Activated naive CD8-positive, alpha-beta T cell treated with anti-CD3 and anti-CD28 coated beads, Interleukin-2, amount 10 ng/mL, durations not matched to agents 7 days and 5 days (primary cell): ENCODE measurements at regions of chr13 and their contacts with region 1.

Region 1: DNA sequence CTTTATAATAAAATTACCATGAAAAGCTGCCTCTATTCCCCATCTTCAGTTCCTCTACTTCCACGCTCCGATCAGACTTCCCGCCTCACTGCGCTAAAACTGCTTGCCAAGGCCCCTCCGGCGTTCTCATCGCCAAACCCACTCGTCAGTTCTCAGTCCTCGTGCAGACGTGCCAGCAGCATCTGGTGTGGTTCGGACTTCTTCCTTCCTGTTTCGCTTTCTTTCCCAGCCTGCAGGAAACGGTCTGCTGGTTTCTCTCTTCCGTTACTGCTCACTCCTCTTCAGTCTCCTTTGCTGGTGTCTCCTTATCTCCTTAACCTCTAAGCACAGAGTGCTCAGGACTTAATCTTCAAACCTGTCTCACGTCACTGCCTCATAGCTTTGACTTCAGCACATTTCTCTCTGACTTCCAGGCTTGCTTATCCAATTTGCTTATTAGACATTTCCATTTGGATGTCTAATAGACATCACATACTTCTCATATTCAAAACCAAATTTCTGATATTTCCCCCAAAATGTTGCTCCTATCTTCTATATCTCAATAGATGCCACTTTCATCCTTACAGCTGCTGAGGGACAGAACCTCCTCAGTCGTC is 40.3 kb downstream of the RCBTB2 start:
- DNase-seq: peak; percentile 70
- ATAC-seq: peak; percentile 85
- H3K4me3 Mint-ChIP-seq: no peak overlapping the region
- H3K27ac Mint-ChIP-seq: no peak overlapping the region
- H3K4me1 Mint-ChIP-seq: peaks cover 43% of the 10 kb centered on the region
- H3K27me3 Mint-ChIP-seq: no peaks in the 10 kb centered on the region

Region 2: DNA sequence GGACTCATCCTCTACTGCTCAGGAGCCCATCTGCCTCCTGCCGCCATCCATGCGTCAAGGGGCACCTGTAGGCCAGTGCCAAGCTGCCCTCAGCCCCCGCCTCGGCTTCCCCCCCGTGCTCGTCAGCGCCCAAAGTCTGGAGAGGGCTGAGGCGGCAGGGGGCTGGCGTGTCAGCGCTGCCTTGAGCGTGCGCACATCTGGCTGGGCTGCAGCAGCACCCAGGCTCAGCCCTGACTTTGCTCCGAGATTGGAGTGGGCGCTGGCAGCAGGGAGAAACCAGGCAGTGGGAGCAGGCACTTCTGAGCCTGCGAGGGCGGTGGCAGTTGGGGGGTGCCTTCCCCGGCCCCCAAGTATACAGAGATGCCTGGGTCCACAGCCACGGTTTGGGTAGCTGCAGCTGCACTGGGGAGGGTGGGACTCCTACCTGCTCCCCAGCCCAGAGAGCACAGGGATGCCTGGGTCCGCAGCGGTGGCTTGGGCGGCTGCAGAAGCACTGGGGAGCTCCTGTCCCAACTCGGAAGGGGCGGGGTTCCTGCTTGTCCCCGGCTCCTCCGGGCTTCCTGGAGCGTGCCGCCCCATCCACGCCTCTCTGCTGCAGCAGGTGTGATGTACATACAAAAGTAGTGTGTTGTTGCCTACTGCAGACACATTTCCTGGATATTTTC is 34.9 kb before region 1 on chr13:
- POLR2A ChIA-PET with region 1: no interaction called
- DNase-seq: no peak
- ATAC-seq: no peak
- H3K4me3 Mint-ChIP-seq: no peak overlapping the region
- H3K27ac Mint-ChIP-seq: no peak overlapping the region
- H3K4me1 Mint-ChIP-seq: peaks cover 8% of the 10 kb centered on the region
- H3K27me3 Mint-ChIP-seq: no peaks in the 10 kb centered on the region

Region 3: DNA sequence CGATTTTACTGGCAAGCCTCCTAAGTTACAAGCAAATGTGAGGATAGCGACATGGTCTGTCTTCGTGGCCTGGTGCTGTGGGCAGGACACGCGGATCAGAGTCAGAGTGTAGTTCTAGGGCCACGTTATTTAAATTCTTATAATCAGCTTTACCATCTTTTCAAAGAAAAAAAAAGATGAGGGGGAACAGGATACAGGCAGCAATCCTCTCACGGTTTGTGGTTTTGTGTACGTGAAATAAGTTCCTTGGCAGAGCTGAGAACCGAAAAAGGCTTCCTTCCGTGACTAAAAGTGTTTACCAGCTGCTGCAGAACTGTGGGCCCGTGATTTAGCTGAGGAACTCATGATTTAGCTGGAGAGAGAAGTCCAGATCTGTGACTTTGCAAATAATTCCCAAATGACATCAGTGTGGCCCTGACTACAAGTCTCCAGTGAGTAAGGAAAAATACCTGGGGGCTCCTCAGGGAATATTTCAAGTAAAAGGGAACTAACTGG is 13.1 kb after region 1 on chr13:
- POLR2A ChIA-PET with region 1: interaction called, 22 read pairs
- DNase-seq: peak; percentile 54
- ATAC-seq: peak; percentile 88
- H3K4me3 Mint-ChIP-seq: peak overlapping the region; percentile 67
- H3K27ac Mint-ChIP-seq: peak overlapping the region; percentile 92
- H3K4me1 Mint-ChIP-seq: peaks cover 62% of the 10 kb centered on the region
- H3K27me3 Mint-ChIP-seq: no peaks in the 10 kb centered on the region

Region 4: DNA sequence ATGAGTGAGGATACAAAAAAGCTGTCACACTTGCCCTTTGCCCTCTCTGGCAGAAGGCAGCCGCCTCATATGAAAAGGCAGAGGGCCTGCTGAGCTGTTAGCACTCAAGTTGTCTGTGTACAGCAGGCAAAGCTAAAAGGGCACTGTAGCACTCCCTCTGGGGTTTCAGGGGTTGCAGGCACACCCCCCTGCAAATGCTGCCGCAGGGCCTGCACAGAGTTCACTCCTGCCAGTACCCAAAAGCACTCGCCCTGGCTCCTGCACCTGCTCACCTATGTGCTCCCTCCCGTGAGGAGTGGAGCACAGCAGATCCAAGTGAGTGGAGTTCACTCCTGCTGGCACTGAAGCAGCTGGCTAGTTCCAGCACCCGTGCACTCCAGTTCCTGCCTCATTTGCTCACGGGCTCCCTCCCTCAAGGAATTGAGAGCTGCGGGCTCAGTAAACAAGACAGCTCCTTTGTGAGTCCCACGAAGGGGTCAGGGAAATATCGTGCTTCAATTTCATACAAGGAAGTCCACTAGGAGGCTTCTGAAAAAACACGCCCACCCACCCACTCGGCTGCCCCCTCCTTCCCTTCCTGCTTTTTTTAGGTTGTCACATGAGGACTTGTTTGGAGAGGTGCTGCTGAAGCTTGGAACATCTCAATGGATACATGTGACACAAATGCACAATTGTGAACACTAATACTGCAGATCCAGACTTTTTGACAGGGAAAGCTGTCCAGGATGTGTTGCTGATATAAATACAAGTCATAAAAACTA is 50.2 kb after region 1 on chr13:
- POLR2A ChIA-PET with region 1: no interaction called
- DNase-seq: no peak
- ATAC-seq: no peak
- H3K4me3 Mint-ChIP-seq: no peak overlapping the region
- H3K27ac Mint-ChIP-seq: no peak overlapping the region
- H3K4me1 Mint-ChIP-seq: peaks cover 6% of the 10 kb centered on the region
- H3K27me3 Mint-ChIP-seq: peaks cover 6% of the 10 kb centered on the region

Region 5: GRCh38 chr13:48769107-48769704 is 276.6 kb after region 1 on chr13:
- POLR2A ChIA-PET with region 1: no interaction called
- DNase-seq: peak; percentile 48
- ATAC-seq: peak; percentile 88
- H3K4me3 Mint-ChIP-seq: no peak overlapping the region
- H3K27ac Mint-ChIP-seq: no peak overlapping the region
- H3K4me1 Mint-ChIP-seq: peaks cover 18% of the 10 kb centered on the region
- H3K27me3 Mint-ChIP-seq: peaks cover 14% of the 10 kb centered on the region

Region 6: GRCh38 chr13:49278211-49278610 is 785.6 kb after region 1 on chr13:
- POLR2A ChIA-PET with region 1: no interaction called
- DNase-seq: no peak
- ATAC-seq: no peak
- H3K4me3 Mint-ChIP-seq: no peak overlapping the region
- H3K27ac Mint-ChIP-seq: no peak overlapping the region
- H3K4me1 Mint-ChIP-seq: no peaks in the 10 kb centered on the region
- H3K27me3 Mint-ChIP-seq: no peaks in the 10 kb centered on the region